ENCODE measurements at regions of chr1 and their contacts with region 1.

Region 1: DNA sequence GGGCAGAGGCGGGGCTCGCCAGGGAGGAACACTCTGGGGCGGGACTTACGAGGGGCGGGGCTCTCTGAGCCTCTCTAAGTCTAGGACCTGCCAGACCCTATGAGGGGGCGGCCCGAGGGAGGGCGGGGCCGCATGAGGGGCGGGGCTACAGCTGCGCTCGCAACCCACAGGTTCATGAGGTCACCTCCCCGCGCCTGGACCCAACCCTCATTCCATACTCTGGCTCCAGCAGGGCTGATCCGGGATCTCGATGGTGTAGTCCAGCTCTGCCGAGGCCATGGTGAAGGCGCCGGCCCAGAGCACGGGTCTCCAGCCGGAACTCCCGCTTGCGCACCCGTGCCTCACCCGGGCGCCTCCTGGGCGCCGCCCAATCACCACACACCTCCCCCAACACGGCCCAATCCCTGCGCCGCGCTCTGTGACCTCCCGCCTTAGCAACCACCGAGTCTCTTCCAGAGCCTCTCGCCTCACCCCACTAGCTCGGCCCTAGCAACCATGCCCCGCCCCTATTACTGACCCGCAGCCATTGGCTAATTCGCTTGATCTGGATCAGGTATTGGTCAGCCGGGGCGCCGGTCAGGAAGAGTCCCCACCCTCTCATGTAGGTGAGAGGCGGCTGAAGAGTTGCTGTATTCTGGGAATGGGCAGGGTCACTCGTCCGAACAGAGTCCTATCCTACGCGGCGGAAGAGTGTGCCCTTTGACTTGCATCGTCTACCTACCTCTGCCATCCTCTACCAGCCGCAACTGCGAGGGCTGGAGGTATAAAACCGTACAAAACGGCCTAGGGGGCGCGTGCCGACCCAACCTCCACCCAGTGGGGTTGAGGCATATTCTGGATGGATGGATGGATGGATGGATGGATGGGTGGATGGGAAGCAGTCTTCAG is at the starts of genes ARMH1 and TMEM53:
- DNase-seq: peak; percentile 99 to 100
- H3K4me3 ChIP-seq: peak within 1 kb of the TSS; percentile 64 to 85
- H3K27ac ChIP-seq: peak within 1 kb of the TSS; percentile 86 to 92
- H3K4me1 ChIP-seq: peaks cover 7 to 27% of the 10 kb centered on the region in 2 donors
- H3K27me3 ChIP-seq: no peaks in the 10 kb centered on the region
- CTCF ChIP-seq: no peak
- total RNA-seq, gene ARMH1: not detected
- total RNA-seq, gene TMEM53: 9.2 TPM

Region 2: GRCh38 chr1:43706598-43707495 is 967.5 kb before region 1 on chr1:
- intact Hi-C with region 1: loop called (anchors 5 kb)
- DNase-seq: peak; percentile 69 to 94
- H3K4me3 ChIP-seq: peak overlapping the region; percentile 96 to 97
- H3K27ac ChIP-seq: peak overlapping the region in 1 of 2 donors; percentile 70
- H3K4me1 ChIP-seq: peaks cover 0 to 9% of the 10 kb centered on the region in 2 donors
- H3K27me3 ChIP-seq: no peaks in the 10 kb centered on the region
- CTCF ChIP-seq: no peak

Region 3: GRCh38 chr1:44213222-44214112 is 460.9 kb before region 1 on chr1 and contains the start of gene DMAP1:
- intact Hi-C with region 1: loop called (anchors 10 kb)
- DNase-seq: peak; percentile 35 to 89
- H3K4me3 ChIP-seq: peak within 1 kb of the TSS; percentile 72 to 91
- H3K27ac ChIP-seq: peak within 1 kb of the TSS; percentile 63 to 79
- H3K4me1 ChIP-seq: peaks cover 2 to 7% of the 10 kb centered on the region in 2 donors
- H3K27me3 ChIP-seq: no peaks in the 10 kb centered on the region
- CTCF ChIP-seq: peak in 1 of 3 experiments; percentile 17
- total RNA-seq, gene DMAP1: 42.7 TPM

Region 4: GRCh38 chr1:44327679-44328491 is 346.5 kb before region 1 on chr1:
- intact Hi-C with region 1: loop called (anchors 1 kb)
- DNase-seq: peak; percentile 61 to 98
- H3K4me3 ChIP-seq: no peak overlapping the region
- H3K27ac ChIP-seq: peak overlapping the region; percentile 58 to 66
- H3K4me1 ChIP-seq: peaks cover 0 to 18% of the 10 kb centered on the region in 2 donors
- H3K27me3 ChIP-seq: no peaks in the 10 kb centered on the region
- CTCF ChIP-seq: no peak

Region 5: GRCh38 chr1:44354840-44355581 is 319.3 kb before region 1 on chr1 and contains the start of gene ERI3:
- intact Hi-C with region 1: loop called (anchors 1 kb)
- DNase-seq: peak; percentile 96 to 99
- H3K4me3 ChIP-seq: peak within 1 kb of the TSS; percentile 95 to 98
- H3K27ac ChIP-seq: peak within 1 kb of the TSS; percentile 68 to 90
- H3K4me1 ChIP-seq: peaks cover 8 to 14% of the 10 kb centered on the region in 2 donors
- H3K27me3 ChIP-seq: no peaks in the 10 kb centered on the region
- CTCF ChIP-seq: no peak
- total RNA-seq, gene ERI3: 69.3 TPM

Region 6: GRCh38 chr1:44645476-44646244 is 28.7 kb before region 1 on chr1:
- intact Hi-C with region 1: loop called (anchors 2 kb)
- DNase-seq: peak; percentile 22 to 85
- H3K4me3 ChIP-seq: peak overlapping the region; percentile 30 to 40
- H3K27ac ChIP-seq: peak overlapping the region; percentile 92 to 94
- H3K4me1 ChIP-seq: peaks cover 6 to 33% of the 10 kb centered on the region in 2 donors
- H3K27me3 ChIP-seq: no peaks in the 10 kb centered on the region
- CTCF ChIP-seq: peak in 2 of 3 experiments; percentile 7 to 10

Region 7: GRCh38 chr1:44730741-44731512 is 56.6 kb after region 1 on chr1 and contains the start of gene RNU5D-1:
- intact Hi-C with region 1: loop called (anchors 5 kb)
- DNase-seq: peak; percentile 81 to 98
- H3K4me3 ChIP-seq: peak within 1 kb of the TSS in 1 of 2 donors; percentile 31
- H3K27ac ChIP-seq: peak within 1 kb of the TSS; percentile 84 to 92
- H3K4me1 ChIP-seq: peaks cover 5 to 15% of the 10 kb centered on the region in 2 donors
- H3K27me3 ChIP-seq: no peaks in the 10 kb centered on the region
- CTCF ChIP-seq: peak; percentile 70 to 76 (median 72)
- total RNA-seq, gene RNU5D-1: not detected

Region 8: DNA sequence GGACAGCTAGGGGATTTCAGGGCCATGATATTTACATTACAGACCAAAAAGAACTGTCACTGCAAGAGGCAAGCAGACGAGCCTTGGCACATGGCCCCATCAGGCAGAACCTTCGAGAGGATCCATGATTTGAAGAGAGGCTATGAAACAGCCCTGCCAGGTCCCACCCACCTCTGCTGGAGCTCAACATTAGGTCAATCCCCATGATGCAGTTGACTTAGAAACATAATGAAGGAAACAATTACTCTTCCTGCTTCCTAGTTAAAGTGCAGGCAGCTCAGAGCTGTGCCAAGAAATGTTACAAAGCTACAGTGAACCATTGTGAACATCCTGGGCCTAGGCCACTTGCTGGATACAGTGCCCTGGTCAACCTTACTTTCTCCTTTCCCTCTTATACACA is 210.4 kb after region 1 on chr1:
- intact Hi-C with region 1: no loop called
- DNase-seq: no peak
- H3K4me3 ChIP-seq: no peak overlapping the region
- H3K27ac ChIP-seq: no peak overlapping the region
- H3K4me1 ChIP-seq: peaks cover 0 to 2% of the 10 kb centered on the region in 2 donors
- H3K27me3 ChIP-seq: no peaks in the 10 kb centered on the region
- CTCF ChIP-seq: no peak